Psoas muscle (tissue), 8 donors: ENCODE measurements at regions of chr6 and their contacts with region 1.

Region 1: DNA sequence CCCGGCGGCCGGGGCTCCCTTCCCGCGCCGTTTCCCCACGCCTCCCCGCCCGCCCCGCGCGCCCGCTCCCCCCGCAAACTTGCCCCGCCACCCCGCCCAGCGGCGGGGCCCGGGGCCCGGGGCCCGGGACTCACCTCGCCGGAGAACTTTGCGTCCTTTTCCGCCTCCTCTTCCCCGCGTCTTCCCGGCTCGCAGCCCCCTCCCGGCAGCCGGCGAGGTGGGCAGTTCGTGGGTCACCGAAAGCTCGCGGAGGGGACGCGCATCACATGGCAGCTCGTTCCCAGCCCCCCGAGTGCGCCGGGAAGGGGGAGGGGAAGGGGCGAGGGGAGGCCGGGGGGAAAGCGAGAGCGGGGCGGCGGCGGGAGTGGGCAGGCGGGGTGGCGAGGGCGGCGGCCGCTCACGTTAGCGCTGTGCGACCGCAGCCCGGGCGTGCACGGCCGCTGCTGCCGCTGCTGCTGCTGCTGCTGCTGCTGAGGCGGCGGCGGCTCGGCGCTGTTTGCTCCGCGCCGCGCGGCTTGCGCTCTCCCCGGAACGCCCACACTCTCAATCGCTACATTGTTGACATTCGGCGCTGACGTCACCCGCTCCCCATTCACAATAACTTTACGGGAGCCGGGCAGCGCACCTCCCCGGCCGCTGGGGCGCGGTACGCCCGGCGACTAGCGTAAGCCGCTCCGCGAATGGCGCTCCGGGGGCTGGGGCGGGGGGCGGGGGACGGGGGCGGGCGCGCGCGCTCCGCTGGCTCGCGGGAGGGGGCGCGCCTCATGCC is at the start of gene BACH2:
- DNase-seq: peak; percentile 90 to 93
- ATAC-seq: peak; percentile 51 to 70 (median 66)
- H3K4me3 ChIP-seq: peak within 1 kb of the TSS; percentile 85
- H3K27ac ChIP-seq: peak within 1 kb of the TSS; percentile 95
- H3K4me1 ChIP-seq: peaks cover 14% of the 10 kb centered on the region
- H3K27me3 ChIP-seq: no peaks in the 10 kb centered on the region
- CTCF ChIP-seq: peak; percentile 9
- total RNA-seq, gene BACH2: 5.9 to 16.9 (median 10.0) TPM

Region 2: GRCh38 chr6:89970609-89971337 is 325.8 kb before region 1 on chr6:
- intact Hi-C with region 1: loop called (anchors 5 kb)
- DNase-seq: peak; percentile 23 to 54
- ATAC-seq: peak; percentile 43 to 84 (median 65)
- H3K4me3 ChIP-seq: no peak overlapping the region
- H3K27ac ChIP-seq: no peak overlapping the region
- H3K4me1 ChIP-seq: peaks cover 32% of the 10 kb centered on the region
- H3K27me3 ChIP-seq: no peaks in the 10 kb centered on the region
- CTCF ChIP-seq: peak; percentile 57

Region 3: GRCh38 chr6:90098001-90098531 is 198.5 kb before region 1 on chr6:
- intact Hi-C with region 1: loop called (anchors 5 to 10 kb)
- DNase-seq: peak; percentile 81 to 82
- ATAC-seq: peak; percentile 87 to 91 (median 88)
- H3K4me3 ChIP-seq: no peak overlapping the region
- H3K27ac ChIP-seq: peak overlapping the region; percentile 86
- H3K4me1 ChIP-seq: peaks cover 39% of the 10 kb centered on the region
- H3K27me3 ChIP-seq: no peaks in the 10 kb centered on the region
- CTCF ChIP-seq: peak; percentile 37

Region 4: GRCh38 chr6:90216072-90216977 is 80.2 kb before region 1 on chr6:
- intact Hi-C with region 1: loop called (anchors 2 to 5 kb)
- DNase-seq: no peak
- ATAC-seq: no peak
- H3K4me3 ChIP-seq: no peak overlapping the region
- H3K27ac ChIP-seq: peak overlapping the region; percentile 96
- H3K4me1 ChIP-seq: peaks cover 48% of the 10 kb centered on the region
- H3K27me3 ChIP-seq: no peaks in the 10 kb centered on the region
- CTCF ChIP-seq: no peak

Region 5: DNA sequence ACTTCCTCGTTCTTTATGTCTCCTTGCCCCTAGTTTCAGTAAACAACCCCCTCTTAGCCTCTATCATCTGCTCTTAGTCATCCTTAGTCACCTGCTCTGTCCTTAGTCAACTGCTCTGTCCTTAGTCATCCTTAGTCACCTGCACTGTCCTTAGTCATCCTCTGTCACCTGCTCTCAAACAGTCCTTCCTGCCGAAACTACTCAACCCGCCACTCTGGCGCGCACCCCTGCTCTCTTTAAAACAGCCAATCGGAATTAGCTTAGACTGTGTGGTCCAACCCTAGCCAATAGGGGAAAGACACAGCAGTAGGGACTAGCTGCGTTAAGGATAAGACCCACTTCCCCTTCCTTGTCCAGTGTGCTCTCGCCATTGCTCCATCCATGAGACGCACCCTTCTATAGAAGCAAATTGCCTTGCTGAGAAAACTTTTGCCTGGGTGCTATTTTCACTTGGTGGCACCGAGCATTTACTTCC is 73.8 kb before region 1 on chr6:
- intact Hi-C with region 1: loop called (anchors 2 to 5 kb)
- DNase-seq: no peak
- ATAC-seq: no peak
- H3K4me3 ChIP-seq: no peak overlapping the region
- H3K27ac ChIP-seq: peak overlapping the region; percentile 96
- H3K4me1 ChIP-seq: peaks cover 23% of the 10 kb centered on the region
- H3K27me3 ChIP-seq: no peaks in the 10 kb centered on the region
- CTCF ChIP-seq: no peak

Region 6: GRCh38 chr6:90386399-90387382 is 90.2 kb after region 1 on chr6:
- intact Hi-C with region 1: loop called in 1 of 2 experiments (anchors 5 kb)
- DNase-seq: peak in 1 of 2 donors; percentile 12
- ATAC-seq: peak; percentile 76 to 85 (median 77)
- H3K4me3 ChIP-seq: no peak overlapping the region
- H3K27ac ChIP-seq: no peak overlapping the region
- H3K4me1 ChIP-seq: peaks cover 6% of the 10 kb centered on the region
- H3K27me3 ChIP-seq: no peaks in the 10 kb centered on the region
- CTCF ChIP-seq: no peak

Region 7: DNA sequence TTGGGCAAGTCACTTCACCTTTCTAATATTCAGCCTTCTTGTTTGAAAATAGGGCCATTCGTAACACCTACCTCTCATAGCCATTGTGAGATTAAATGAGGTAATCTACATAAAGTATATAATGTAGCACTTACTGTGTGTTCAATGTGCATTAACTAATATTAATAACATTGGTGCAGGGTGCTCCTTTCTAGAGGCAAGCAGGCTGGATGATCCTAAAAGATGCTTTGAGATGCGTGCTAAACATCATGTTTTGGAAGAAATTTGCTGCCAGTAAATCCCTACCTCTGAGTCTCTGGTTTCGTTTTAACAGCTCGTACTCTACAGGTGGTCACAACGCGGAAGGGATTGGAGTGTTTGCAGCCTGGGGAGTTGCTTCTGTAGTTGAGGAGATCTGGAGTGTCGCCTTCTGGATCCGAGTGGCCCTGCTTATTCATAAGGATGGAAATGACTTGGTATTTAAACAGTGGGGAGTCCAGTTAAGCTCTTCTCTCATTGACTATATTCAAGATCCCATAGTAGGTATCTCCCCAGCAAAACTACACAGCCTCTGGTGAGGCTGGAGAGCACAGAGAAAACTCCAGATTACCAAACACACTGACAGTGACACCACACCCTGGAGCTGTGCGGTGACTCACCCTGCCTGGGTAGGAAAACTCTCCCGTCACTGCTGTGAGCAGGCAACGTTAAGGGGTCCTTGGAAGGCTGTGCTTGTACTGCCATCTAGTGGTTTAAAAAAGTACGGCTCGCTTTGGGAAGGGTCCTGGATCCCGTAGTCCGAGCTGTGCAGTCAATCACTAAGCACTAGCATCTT is 182.5 kb after region 1 on chr6:
- intact Hi-C with region 1: loop called (anchors 5 to 10 kb)
- DNase-seq: peak; percentile 90 to 94
- ATAC-seq: peak; percentile 100
- H3K4me3 ChIP-seq: no peak overlapping the region
- H3K27ac ChIP-seq: peak overlapping the region; percentile 51
- H3K4me1 ChIP-seq: peaks cover 9% of the 10 kb centered on the region
- H3K27me3 ChIP-seq: no peaks in the 10 kb centered on the region
- CTCF ChIP-seq: peak; percentile 97